GM10248 (cell line): ENCODE measurements at regions of chr15 and their contacts with region 1.

Region 1: DNA sequence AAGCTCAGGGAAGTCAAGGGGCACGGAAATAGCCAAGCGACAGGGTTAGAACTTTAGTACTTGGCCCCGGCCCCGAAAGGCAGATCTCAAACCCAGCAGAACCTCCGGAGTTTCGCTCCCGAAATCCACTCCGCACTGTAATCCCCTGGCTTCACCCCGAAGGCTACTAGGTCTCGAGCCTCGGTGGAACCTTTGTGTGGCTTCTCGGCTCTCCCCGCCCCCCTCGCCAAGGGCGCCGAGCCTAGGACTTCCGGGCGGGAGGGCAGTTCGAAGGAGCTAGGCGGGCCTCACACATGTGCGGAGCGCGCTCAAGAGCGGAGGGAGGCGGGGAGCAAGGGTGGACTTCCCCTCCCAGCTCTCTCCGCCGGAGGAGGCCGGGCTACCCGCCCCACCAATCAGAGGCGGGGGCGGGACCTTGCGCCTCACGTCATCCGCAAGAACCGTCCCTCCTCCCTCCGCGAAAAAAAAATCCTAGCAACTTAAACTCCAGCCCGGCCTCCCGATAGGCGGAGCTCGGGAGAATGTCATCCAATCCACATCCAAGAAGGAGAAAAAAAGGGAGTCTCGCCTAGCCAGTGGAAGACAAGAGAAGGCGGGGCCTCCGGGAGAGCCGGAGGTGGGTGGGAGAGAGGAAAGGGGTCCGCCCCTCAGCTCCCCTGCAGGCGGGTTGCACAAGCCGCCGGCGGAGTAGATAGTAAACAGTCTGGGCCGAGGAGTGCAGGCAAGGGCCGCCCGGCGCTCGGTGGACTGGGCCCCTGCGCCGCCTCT is 2.4 kb upstream of the SIN3A start:
- DNase-seq: peak; percentile 93
- CTCF ChIP-seq: no peak

Region 2: DNA sequence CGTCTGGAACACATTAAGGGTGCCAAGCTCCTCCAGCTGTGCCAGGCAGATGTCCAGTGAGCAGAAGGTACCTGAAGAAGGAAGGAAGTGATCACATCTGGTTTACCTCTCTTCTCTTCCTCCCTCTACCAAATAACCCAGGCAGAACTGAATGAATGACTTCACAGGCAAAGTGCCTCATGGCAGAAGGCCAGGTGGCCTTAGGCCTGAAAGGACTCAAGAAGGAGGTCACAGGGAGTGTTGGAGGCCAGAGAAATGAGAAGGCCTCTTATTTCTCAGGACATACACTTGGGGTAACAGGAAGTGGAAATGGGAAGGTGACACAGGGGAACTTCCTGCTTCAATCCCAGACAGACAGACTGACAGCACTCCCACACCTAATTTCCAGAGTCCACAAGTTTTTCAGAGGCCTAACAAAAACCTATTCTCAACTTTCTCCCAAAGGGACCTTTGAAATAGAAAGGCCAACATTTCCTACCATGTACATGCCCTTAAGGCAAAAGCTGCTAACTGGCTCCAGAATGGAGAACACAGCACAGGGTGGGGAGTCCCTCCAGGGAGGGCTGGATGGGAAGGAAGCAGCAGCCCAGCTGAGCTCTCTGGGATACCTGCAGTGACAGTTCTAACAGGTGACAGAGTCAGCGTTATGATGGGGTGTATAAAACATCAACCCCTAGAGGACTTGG is 15.2 kb after region 1 on chr15:
- CTCF ChIA-PET with region 1: interaction called, 24 read pairs
- POLR2A ChIA-PET with region 1: interaction called, 4 read pairs
- DNase-seq: no peak
- CTCF ChIP-seq: no peak

Region 3: DNA sequence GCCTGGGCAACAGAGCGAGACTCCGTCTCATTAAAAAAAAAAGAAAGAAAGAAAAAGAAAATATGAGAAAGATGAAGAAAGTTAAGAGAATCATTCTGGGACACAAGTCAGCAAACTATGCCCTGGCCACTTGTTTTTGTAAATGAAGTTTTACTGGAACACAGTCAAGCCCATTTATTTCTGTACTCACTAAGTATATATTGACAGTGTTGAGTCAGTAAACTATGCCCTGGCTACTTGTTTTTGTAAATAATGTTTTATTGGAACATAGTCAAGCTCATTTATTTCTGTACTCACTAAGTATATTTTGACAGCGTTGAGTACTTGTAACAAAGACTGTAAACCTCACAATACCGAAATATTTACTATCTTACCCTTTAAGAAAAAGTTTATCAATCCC is 39.8 kb after region 1 on chr15:
- CTCF ChIA-PET with region 1: interaction called, 3 read pairs
- POLR2A ChIA-PET with region 1: interaction called, 14 read pairs
- DNase-seq: no peak
- CTCF ChIP-seq: no peak

Region 4: GRCh38 chr15:75639709-75640482 is 186.0 kb after region 1 on chr15 and contains the start of gene IMP3:
- CTCF ChIA-PET with region 1: interaction called, 8 read pairs
- POLR2A ChIA-PET with region 1: interaction called, 11 read pairs
- DNase-seq: peak; percentile 97
- CTCF ChIP-seq: no peak

Region 5: GRCh38 chr15:75666823-75667501 is 213.1 kb after region 1 on chr15:
- CTCF ChIA-PET with region 1: no interaction called
- POLR2A ChIA-PET with region 1: no interaction called
- DNase-seq: no peak
- CTCF ChIP-seq: no peak